K562 (cell line): ENCODE measurements at regions of chr1 and their contacts with region 1.

Region 1: DNA sequence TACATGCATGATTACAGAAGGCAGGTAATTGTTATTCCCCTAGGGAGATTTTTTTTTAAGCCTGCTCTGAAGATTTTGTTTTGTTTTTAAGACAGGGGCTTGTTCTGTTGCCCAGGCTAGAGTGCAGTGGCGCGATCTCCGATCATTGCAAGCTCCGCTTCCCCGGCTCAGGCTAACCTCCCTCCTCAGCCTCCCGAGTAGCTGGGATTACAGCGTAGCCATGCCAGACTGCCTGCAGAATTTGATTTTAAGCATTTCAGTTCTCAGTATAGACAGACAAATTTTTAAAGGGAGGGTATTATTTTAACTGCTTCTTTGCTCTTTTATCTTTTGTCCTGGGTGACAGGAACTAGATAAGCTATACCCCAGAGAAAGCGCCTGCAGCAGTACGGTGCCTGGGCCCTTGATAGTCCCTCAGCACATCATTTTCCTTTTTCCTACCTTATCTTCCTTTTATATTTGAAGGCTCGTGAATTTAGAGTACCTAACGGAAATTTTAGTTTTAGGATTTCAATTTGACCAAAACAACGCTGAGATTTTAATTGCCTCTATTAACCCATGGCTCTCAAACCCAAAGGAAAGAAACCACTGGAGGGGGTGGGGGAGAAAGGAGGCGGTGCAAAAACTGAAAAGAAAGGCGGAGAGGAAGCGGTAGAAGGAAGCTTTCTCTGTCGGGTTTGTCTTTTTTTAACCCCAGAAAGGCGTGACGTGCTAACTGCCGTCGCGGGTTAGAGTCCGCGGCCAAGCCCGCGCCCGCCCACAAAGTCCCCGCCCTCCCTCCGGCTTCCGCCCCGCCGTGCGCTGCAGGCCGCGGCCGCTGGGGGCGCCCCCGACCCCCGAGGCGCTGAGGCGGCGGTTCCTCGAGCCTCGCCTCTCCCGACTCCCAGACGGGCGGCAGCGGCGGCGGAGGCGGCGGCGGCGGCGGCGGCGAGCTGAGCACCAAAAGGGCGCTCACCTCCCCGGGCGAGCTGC is at the start of gene EEIG2:
- DNase-seq: peak; percentile 94 to 96 (median 96)
- ATAC-seq: peak; percentile 84
- H3K4me3 ChIP-seq: peak within 1 kb of the TSS; percentile 57
- H3K27ac ChIP-seq: peak within 1 kb of the TSS; percentile 78
- H3K4me1 ChIP-seq: peaks cover 25 to 51% of the 10 kb centered on the region in 2 experiments
- H3K27me3 ChIP-seq: no peaks in the 10 kb centered on the region
- CTCF ChIP-seq: peak; percentile 75 to 91 (median 84)
- EP300 ChIP-seq: peak; percentile 41
- POLR2A ChIP-seq: no peak; the same call in 1 of the 2 replicates
- RAD21 ChIP-seq: peak; percentile 42 to 49
- polyA plus RNA-seq, gene EEIG2: 6.1 to 8.0 TPM

Region 2: GRCh38 chr1:107817935-107818334 is 741.6 kb before region 1 on chr1:
- CTCF ChIA-PET with region 1: no interaction called
- POLR2A ChIA-PET with region 1: no interaction called
- in situ Hi-C with region 1: no loop called
- intact Hi-C with region 1: no loop called
- DNase-seq: no peak
- ATAC-seq: no peak
- H3K4me3 ChIP-seq: no peak overlapping the region
- H3K27ac ChIP-seq: no peak overlapping the region
- H3K4me1 ChIP-seq: no peaks in the 10 kb centered on the region
- H3K27me3 ChIP-seq: no peaks in the 10 kb centered on the region
- CTCF ChIP-seq: no peak
- EP300 ChIP-seq: no peak
- POLR2A ChIP-seq: no peak
- RAD21 ChIP-seq: no peak

Region 3: GRCh38 chr1:108521990-108522393 is 37.5 kb before region 1 on chr1:
- CTCF ChIA-PET with region 1: no interaction called
- POLR2A ChIA-PET with region 1: interaction called, 10 read pairs
- in situ Hi-C with region 1: no loop called
- intact Hi-C with region 1: no loop called
- DNase-seq: no peak
- ATAC-seq: peak; percentile 45
- H3K4me3 ChIP-seq: no peak overlapping the region
- H3K27ac ChIP-seq: peak overlapping the region; percentile 3; the same call in 1 of the 3 replicates
- H3K4me1 ChIP-seq: peaks cover 0 to 11% of the 10 kb centered on the region in 2 experiments; a peak in 4 of 5 replicates
- H3K27me3 ChIP-seq: no peaks in the 10 kb centered on the region
- CTCF ChIP-seq: no peak
- EP300 ChIP-seq: peak; percentile 92
- POLR2A ChIP-seq: no peak
- RAD21 ChIP-seq: peak in 1 of 2 experiments; percentile 7; a peak in 1 of 4 replicates

Region 4: DNA sequence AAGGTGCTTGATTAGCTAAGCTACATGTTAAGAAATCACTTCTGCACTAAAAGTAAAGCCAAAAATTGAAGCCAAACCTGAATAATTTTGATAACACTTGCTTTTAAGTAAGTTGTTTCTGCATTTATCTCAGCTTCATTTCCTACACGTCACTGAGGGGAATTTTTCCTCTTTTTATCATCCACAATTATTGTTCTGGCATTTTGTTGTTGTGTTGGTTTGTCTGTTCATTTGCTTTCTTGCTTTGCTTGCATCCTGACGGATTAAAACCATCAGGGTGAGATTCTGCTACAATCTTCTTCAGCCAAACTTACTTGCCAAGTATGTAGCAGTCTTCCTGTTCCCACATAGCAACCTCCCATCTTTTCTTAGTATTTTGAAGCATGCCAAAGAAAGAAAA is 17.6 kb before region 1 on chr1:
- CTCF ChIA-PET with region 1: no interaction called
- POLR2A ChIA-PET with region 1: interaction called, 10 read pairs
- in situ Hi-C with region 1: no loop called
- intact Hi-C with region 1: no loop called
- DNase-seq: no peak
- ATAC-seq: no peak
- H3K4me3 ChIP-seq: no peak overlapping the region
- H3K27ac ChIP-seq: no peak overlapping the region
- H3K4me1 ChIP-seq: 0 out of 5 replicates have a peak, but pooled peaks cover 0 to 4% of the 10 kb centered on the region in 2 experiments
- H3K27me3 ChIP-seq: no peaks in the 10 kb centered on the region
- CTCF ChIP-seq: no peak
- EP300 ChIP-seq: no peak
- POLR2A ChIP-seq: no peak
- RAD21 ChIP-seq: no peak

Region 5: DNA sequence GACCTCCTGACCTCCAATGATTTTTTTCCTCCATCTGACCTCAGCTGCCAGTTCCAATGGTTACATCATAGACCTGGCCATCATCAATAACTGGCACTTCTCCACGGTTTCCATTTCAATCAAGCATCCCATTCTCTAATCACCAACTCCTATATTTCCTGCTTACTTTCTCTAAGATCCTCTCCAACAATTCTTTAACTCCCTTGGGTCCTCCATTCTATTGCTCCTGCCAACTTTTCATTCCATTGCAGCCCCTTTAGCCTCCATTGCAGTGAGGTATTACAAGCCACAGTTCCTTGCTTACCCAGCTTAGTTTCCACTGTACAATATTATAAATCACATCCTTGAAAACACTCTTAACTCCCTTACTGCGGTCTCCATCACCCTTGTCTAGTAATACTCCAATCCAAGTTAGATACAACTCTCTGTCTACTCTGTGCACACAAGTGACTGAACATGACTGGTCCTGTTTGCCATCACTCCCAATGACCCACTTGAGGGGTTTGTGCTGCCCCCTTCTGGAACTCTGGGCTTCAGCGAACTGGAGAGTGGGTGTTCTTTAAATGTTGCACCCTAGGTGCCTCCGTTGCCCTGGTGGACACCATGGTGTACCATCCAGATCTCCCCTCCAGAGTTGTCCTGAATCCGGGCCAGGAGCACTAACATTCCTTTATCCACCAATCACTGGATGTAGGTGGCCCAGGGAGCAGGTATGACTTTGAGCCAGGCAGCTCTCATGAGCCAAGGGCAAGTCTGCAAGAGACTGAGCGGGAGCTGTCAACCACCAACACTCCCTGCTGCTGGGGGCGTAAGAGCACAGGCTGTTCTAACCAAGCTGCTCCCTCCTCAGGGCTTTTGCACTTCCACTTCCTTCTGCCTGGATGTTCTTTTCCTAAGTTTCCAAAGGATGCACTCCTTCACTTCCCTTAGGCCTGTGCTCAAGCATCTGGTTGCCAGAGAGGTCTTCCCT is 149.5 kb after region 1 on chr1:
- CTCF ChIA-PET with region 1: no interaction called
- POLR2A ChIA-PET with region 1: no interaction called
- in situ Hi-C with region 1: no loop called
- intact Hi-C with region 1: loop called (anchors 5 kb)
- DNase-seq: peak in 3 of 4 experiments; percentile 29 to 80 (median 59)
- ATAC-seq: peak; percentile 91
- H3K4me3 ChIP-seq: no peak overlapping the region
- H3K27ac ChIP-seq: no peak overlapping the region
- H3K4me1 ChIP-seq: no peaks in the 10 kb centered on the region
- H3K27me3 ChIP-seq: peaks cover 0 to 3% of the 10 kb centered on the region in 2 experiments; a peak in 1 of 5 replicates
- CTCF ChIP-seq: peak; percentile 82 to 89 (median 86)
- EP300 ChIP-seq: no peak
- POLR2A ChIP-seq: no peak
- RAD21 ChIP-seq: peak; percentile 50 to 80